ENCODE measurements at regions of chrX and their contacts with region 1.

Region 1: DNA sequence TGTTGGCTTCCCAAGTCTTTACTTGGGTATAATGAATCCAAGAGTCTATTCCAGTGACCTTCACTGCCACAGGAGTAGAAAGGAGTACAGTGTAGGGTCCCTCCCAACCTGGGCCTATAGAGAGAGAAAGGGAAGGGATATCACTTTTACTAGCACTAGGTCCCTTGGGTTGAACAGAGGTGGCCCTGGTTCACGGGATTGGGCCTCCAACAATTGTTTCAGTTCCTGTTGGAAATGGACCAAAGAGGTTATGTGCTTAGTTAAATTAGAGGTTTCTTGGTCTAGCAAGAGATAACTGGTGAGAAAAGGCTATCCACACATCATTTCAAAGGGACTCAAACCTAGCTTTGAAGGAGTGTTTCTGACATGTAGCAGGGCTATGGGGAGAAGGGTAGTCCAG is 57.1 kb upstream of the MED14 start:
- DNase-seq: no peak
- ATAC-seq: no peak
- H3K4me3 ChIP-seq: no peak overlapping the region
- H3K27ac ChIP-seq: no peak overlapping the region
- H3K4me1 ChIP-seq: peaks cover 5% of the 10 kb centered on the region
- H3K27me3 ChIP-seq: no peaks in the 10 kb centered on the region; the same call in 1 of the 2 replicates
- CTCF ChIP-seq: no peak
- POLR2A ChIP-seq: no peak
- RAD21 ChIP-seq: no peak

Region 2: DNA sequence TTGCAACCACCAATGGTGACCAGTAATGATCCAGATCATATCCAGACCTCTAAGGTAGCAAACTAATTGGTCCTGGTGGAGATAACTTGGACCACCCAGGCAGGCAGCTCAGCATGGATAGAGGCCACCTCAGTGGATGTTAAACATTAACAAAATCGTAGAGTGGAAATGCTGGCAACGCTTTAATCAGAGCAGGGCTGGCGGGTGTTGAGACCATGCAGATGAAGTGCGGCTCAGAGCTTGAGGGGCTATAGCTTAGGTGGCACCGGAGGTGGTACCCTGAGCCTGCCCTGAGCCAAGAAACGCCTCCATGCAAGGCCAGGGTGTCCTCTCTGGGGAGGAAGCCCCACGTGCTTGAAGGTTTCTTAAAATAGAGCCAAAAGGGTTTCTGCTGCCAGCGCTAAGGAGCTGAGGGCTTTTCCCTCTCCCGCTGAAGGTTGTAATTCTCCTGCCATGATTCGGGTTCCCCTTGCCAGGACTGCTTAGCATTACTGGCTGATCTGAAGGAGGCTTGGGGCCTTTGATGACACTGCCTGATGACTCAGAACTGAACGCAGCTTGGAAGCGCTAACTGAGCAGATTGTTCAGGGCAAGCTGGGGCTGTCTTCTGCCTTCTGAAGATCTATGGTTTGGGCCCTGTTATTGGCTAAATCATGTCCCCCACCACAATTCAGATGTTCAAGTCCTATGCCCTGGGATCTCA is 389.5 kb before region 1 on chrX:
- CTCF ChIA-PET with region 1: no interaction called
- POLR2A ChIA-PET with region 1: no interaction called
- dilution Hi-C with region 1: no loop called
- in situ Hi-C with region 1: no loop called
- intact Hi-C with region 1: no loop called
- DNase-seq: peak; percentile 46
- ATAC-seq: peak; percentile 80
- H3K4me3 ChIP-seq: no peak overlapping the region
- H3K27ac ChIP-seq: no peak overlapping the region
- H3K4me1 ChIP-seq: no peaks in the 10 kb centered on the region
- H3K27me3 ChIP-seq: peaks cover 27% of the 10 kb centered on the region
- CTCF ChIP-seq: no peak
- POLR2A ChIP-seq: no peak
- RAD21 ChIP-seq: no peak

Region 3: DNA sequence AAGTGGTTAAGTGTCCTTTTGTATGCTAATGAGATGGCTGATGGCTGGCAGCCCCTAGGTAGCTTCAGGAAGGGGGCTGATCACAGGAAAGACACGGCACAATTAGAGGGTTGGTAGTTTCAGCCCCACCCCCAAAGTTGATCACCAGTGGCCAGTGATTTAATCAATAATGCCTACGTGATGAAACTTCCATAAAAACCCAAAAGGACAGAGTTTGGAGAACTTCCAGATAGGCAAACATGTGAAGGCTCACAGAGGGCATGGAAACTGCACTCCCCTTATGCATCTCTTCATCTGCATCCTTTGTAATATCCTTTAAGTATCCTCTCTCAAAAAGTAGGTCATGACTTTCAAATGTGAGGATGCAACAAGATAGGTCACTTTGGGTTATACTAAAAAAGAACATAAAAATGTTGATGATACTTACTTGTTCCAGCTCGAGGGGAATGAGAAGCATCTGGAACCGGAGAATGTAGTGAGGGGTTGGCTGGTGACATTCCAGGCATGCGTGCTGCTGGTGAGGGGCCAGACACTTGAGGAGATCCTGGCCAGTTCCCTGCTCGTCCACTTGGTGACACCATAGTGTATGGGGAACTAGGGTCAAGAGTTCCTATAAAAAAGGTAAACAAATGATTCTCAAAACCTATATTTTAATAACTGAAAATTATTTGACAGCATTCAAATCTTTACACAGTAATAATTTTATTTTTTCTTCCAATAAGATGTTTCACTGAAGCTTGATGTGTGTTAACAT is 128.4 kb before region 1 on chrX:
- CTCF ChIA-PET with region 1: interaction called, 4 read pairs
- POLR2A ChIA-PET with region 1: no interaction called
- dilution Hi-C with region 1: no loop called
- in situ Hi-C with region 1: loop called (anchors 10 kb)
- intact Hi-C with region 1: loop called (anchors 1 kb)
- DNase-seq: peak; percentile 33
- ATAC-seq: peak; percentile 86
- H3K4me3 ChIP-seq: no peak overlapping the region
- H3K27ac ChIP-seq: no peak overlapping the region
- H3K4me1 ChIP-seq: no peaks in the 10 kb centered on the region
- H3K27me3 ChIP-seq: no peaks in the 10 kb centered on the region; the same call in 1 of the 2 replicates
- CTCF ChIP-seq: peak; percentile 48
- POLR2A ChIP-seq: no peak
- RAD21 ChIP-seq: peak; percentile 45

Region 4: GRCh38 chrX:40922307-40922706 is 129.9 kb after region 1 on chrX:
- CTCF ChIA-PET with region 1: no interaction called
- POLR2A ChIA-PET with region 1: no interaction called
- dilution Hi-C with region 1: no loop called
- in situ Hi-C with region 1: no loop called
- intact Hi-C with region 1: loop called (anchors 1 kb)
- DNase-seq: peak; percentile 44
- ATAC-seq: peak; percentile 32
- H3K4me3 ChIP-seq: no peak overlapping the region
- H3K27ac ChIP-seq: no peak overlapping the region
- H3K4me1 ChIP-seq: no peaks in the 10 kb centered on the region
- H3K27me3 ChIP-seq: no peaks in the 10 kb centered on the region; the same call in 1 of the 2 replicates
- CTCF ChIP-seq: peak; percentile 39
- POLR2A ChIP-seq: no peak
- RAD21 ChIP-seq: peak; percentile 40